Activated CD4-positive, alpha-beta memory T cell treated with anti-CD3 and anti-CD28 coated beads for 36 hours (primary cell): ENCODE measurements at regions of chr4 and their contacts with region 1.

Region 1: DNA sequence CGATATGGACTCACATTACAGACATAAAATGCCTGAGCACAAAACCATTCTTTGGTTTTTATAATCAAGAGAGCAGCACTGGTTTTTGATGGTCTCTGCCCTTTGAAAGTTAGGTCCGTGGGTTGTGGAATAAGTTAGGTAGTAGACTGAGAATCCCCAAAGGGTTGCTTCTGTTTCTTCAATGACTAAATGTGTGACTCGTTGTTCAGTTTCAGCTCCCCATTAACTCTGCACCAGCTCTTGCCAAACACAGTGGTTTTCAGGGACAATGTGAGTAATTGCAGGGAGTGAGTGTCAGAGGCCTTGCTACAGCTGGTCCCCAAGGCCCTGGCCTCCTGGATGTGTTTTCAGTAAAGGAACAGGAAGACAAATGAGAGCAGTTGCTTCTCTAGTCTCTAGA is 24.8 kb downstream of the SMIM20 start:
- DNase-seq: peak; percentile 77
- H3K4me3 Mint-ChIP-seq: no peak overlapping the region
- H3K27ac Mint-ChIP-seq: peak overlapping the region; percentile 82
- H3K4me1 Mint-ChIP-seq: peaks cover 24% of the 10 kb centered on the region
- H3K27me3 Mint-ChIP-seq: peaks cover 20% of the 10 kb centered on the region

Region 2: GRCh38 chr4:25844961-25845712 is 93.7 kb before region 1 on chr4:
- CTCF ChIA-PET with region 1: no interaction called
- POLR2A ChIA-PET with region 1: no interaction called
- intact Hi-C with region 1: loop called (anchors 1 kb)
- DNase-seq: peak; percentile 54
- H3K4me3 Mint-ChIP-seq: no peak overlapping the region
- H3K27ac Mint-ChIP-seq: peak overlapping the region; percentile 75
- H3K4me1 Mint-ChIP-seq: peaks cover 79% of the 10 kb centered on the region
- H3K27me3 Mint-ChIP-seq: no peaks in the 10 kb centered on the region

Region 3: GRCh38 chr4:25913851-25914669 is 24.7 kb before region 1 on chr4 and contains the start of gene SMIM20:
- CTCF ChIA-PET with region 1: no interaction called
- POLR2A ChIA-PET with region 1: interaction called, 4 read pairs
- intact Hi-C with region 1: loop called (anchors 1 kb)
- DNase-seq: peak; percentile 93
- H3K4me3 Mint-ChIP-seq: peak within 1 kb of the TSS; percentile 87
- H3K27ac Mint-ChIP-seq: peak within 1 kb of the TSS; percentile 94
- H3K4me1 Mint-ChIP-seq: peaks cover 17% of the 10 kb centered on the region
- H3K27me3 Mint-ChIP-seq: no peaks in the 10 kb centered on the region
- total RNA-seq, gene SMIM20: 26.0 to 28.0 TPM

Region 4: GRCh38 chr4:26005764-26006163 is 67.0 kb after region 1 on chr4:
- CTCF ChIA-PET with region 1: interaction called, 3 read pairs
- POLR2A ChIA-PET with region 1: no interaction called
- intact Hi-C with region 1: loop called (anchors 1 kb)
- DNase-seq: no peak
- H3K4me3 Mint-ChIP-seq: no peak overlapping the region
- H3K27ac Mint-ChIP-seq: no peak overlapping the region
- H3K4me1 Mint-ChIP-seq: peaks cover 7% of the 10 kb centered on the region
- H3K27me3 Mint-ChIP-seq: peaks cover 10% of the 10 kb centered on the region